Posterior vena cava (tissue), 2 donors: ENCODE measurements at regions of chr1 and their contacts with region 1.

Region 1: DNA sequence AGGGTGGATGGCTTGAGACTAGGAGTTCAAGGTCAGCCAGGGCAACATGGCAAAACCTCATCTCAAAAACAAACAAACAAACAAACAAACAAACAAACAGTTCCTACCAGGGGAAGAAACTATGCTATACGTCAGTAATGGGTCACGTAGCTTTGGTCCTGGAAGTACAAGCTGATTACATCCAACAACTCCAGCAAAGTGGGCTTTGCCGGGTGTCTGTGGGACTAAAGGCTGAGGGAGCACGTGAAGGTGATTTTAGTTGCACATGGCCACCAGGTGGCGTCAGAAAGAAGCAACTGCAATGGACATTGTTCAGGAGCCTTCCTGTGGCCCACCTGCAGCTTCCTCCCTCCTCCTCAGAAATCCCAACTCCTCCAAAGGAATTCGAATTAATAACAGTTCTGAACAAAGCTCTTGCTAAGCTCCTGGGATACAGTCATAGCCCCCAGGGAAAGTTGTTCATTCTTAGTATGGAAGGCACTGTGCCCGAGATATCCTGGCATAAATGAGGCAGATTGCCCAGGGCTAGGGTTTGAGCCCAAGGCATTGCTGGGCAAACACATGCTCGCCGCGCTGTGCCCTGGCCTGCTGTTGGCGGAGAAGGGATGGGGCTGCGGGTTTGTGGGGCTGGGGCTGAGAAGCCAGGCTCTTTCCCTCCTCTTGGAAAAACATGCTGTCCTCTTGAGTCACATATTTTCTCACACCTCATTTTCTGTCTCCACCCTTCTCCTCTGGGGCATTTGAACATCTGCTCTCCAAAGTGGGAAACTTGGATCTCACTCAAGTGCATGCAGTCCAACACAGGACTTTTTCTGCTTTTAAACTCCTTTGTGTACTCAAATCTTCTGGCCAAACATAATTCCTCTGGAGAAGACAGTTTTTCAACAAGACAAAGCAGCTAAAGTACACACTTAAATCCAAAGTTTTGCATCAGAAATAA is 28.6 kb downstream of the AKNAD1 start:
- DNase-seq: peak; percentile 91

Region 2: GRCh38 chr1:108590957-108591356 is 237.3 kb before region 1 on chr1:
- intact Hi-C with region 1: no loop called
- DNase-seq: no peak

Region 3: GRCh38 chr1:108877348-108878159 is 49.3 kb after region 1 on chr1:
- intact Hi-C with region 1: loop called in 1 of 2 experiments (anchors 2 kb)
- DNase-seq: no peak

Region 4: GRCh38 chr1:108897865-108898720 is 69.8 kb after region 1 on chr1:
- intact Hi-C with region 1: loop called (anchors 2 to 10 kb)
- DNase-seq: no peak